ENCODE measurements at regions of chr7 and their contacts with region 1.

Region 1: DNA sequence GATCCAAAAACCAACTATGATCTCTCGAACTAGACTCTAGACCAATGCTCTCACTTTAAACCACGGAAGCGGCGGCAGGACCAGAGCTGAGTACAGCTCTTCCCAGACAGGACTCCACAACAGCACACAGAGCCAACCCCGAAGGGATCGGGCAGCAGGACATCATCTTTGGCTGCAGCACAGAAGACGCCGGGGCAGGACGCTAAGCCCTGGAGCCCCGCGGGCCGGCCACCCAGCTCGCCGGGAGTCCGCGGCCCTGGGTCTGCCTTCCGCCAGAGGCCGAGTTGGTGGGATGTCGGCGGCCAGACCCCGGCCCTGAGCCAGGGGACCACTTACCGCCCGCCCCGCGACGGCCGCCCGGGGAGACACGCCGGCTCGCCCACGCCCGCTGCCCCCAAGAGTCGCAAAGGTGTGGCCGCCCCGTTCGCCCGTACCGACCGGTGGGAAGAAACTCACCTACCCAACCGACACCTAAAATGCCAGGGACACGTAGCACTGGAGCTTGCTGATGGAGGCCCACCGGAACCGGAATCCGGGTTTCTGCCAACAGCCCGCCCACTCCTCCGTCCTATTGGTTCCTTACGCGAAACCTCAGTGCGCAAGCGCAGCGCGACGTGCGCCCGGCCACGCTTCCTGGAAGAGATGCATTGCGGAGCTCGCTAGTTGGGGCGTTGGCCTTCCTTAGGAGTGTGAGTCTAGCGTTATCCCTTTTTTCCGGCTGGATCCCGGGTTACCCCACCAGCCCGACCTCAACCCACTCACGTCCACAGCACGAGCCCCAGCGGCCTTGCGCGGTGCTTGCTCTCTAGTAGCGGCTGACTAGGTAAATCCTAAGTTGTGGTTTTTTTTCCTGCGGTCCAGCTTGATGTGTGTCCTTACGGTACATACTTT is at the start of gene SEC61G:
- DNase-seq: peak; percentile 91 to 96 (median 93)
- H3K4me3 ChIP-seq: peak within 1 kb of the TSS; percentile 95
- H3K4me3 Mint-ChIP-seq: peak within 1 kb of the TSS; percentile 98 to 100 (median 100)
- H3K27ac ChIP-seq: peak within 1 kb of the TSS; percentile 77
- H3K27ac Mint-ChIP-seq: peak within 1 kb of the TSS; percentile 92 to 99 (median 97)
- H3K4me1 ChIP-seq: peaks cover 23% of the 10 kb centered on the region
- H3K4me1 Mint-ChIP-seq: peaks cover 43 to 54% (median 54%) of the 10 kb centered on the region in 3 donors
- H3K27me3 ChIP-seq: no peaks in the 10 kb centered on the region
- H3K27me3 Mint-ChIP-seq: no peaks in the 10 kb centered on the region
- total RNA-seq, gene SEC61G: 138 to 144 TPM

Region 2: DNA sequence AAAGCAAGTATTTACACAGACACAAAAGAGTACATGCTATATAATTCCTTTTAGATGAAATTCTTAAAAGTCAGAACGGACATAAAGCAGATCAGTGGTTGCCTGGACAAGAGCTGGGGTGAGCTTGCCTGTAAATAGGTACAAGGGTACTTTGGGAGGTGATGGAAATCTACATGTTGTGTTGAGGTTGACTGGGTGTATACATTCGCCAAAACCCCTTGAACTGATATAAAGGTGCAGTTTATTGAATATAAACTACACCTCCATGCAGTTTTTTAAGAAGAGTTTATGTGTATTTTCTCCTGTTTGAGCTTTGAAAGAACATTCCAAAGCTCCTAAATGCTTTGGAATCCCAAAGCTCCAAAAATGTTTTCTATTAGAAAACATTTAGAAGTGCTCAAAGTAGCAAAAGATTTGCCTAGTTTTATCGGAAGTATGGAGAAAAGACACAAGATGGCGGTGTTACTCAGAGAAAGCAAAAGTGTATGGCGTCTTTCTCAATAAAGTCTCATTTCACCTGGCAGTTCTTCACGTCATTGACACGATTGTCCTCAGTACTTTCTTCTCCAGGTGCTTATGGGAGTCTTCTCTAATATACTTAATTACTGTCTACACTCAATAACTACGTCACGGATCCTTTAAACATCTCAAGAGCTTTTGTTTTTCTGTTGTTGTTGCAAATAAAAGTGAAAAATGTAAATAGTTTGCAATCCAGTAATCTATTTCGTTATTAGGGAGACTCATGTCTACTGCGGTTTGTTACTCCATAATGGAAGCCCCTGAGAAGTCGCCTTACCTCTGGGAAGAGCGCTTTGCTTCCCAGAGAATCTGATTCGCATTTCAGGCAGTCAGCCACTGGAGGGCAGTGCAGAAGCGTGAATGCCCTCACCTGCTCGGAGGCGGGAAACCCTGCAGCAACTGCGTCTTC is 14.8 kb after region 1 on chr7:
- CTCF ChIA-PET with region 1: interaction called, 22 read pairs
- POLR2A ChIA-PET with region 1: interaction called, 5 read pairs
- DNase-seq: peak; percentile 32 to 70 (median 49)
- H3K4me3 ChIP-seq: peak overlapping the region; percentile 39
- H3K4me3 Mint-ChIP-seq: peak overlapping the region; percentile 69 to 82 (median 79)
- H3K27ac ChIP-seq: no peak overlapping the region
- H3K27ac Mint-ChIP-seq: peak overlapping the region in 6 of 8 donors; percentile 22 to 69 (median 48)
- H3K4me1 ChIP-seq: no peaks in the 10 kb centered on the region
- H3K4me1 Mint-ChIP-seq: peaks cover 7 to 12% (median 9%) of the 10 kb centered on the region in 3 donors
- H3K27me3 ChIP-seq: peaks cover 3% of the 10 kb centered on the region
- H3K27me3 Mint-ChIP-seq: peaks cover 13 to 55% of the 10 kb centered on the region in 2 donors

Region 3: DNA sequence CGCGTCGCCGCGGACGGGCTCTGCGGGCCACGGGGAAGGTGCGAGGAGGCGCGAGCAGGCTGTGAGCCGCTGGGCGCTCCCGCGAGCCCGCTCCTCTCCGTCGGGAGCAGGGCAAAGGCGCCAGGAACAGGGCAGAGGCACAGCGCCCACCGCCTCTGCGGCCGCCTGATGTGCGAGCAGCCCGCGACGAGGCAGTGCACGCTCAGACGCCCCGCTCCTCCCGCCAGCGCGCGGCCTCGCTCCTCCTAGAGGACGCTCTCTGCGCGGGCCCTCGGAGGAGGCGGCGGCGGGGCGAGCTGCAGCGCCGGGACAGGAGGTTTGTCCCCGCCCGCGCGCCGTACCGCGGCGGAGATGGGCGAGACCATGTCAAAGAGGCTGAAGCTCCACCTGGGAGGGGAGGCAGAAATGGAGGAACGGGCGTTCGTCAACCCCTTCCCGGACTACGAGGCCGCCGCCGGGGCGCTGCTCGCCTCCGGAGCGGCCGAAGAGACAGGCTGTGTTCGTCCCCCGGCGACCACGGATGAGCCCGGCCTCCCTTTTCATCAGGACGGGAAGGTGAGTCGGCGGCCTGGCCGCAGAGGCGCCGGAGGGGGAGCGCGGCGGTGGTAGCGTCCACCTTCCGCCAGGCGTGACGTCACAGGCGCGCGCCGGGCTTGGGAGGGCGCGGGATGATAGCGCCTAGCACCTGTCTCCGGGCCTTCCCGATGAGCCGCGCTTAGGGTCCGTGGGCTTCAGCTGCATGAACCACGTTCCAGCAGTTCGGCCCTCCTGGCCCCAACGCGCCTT is 606.9 kb after region 1 on chr7:
- CTCF ChIA-PET with region 1: no interaction called
- POLR2A ChIA-PET with region 1: interaction called, 15 read pairs
- DNase-seq: peak; percentile 93 to 99 (median 97)
- H3K4me3 ChIP-seq: peak overlapping the region; percentile 100
- H3K4me3 Mint-ChIP-seq: peak overlapping the region in 6 of 7 donors; percentile 94 to 96 (median 95)
- H3K27ac ChIP-seq: peak overlapping the region; percentile 98
- H3K27ac Mint-ChIP-seq: peak overlapping the region in 7 of 8 donors; percentile 98 to 99 (median 99)
- H3K4me1 ChIP-seq: peaks cover 25% of the 10 kb centered on the region
- H3K4me1 Mint-ChIP-seq: peaks cover 8 to 29% (median 20%) of the 10 kb centered on the region in 3 donors
- H3K27me3 ChIP-seq: no peaks in the 10 kb centered on the region
- H3K27me3 Mint-ChIP-seq: peaks cover 0 to 4% of the 10 kb centered on the region in 2 donors

Measured in CD8-positive, alpha-beta memory T cell (primary cell).